HEK293T (cell line): ENCODE measurements at regions of chr1 and their contacts with region 1.

Region 1: GRCh38 chr1:3727042-3727824 is 25.0 kb upstream of the CCDC27 start:
- DNase-seq: peak; percentile 53

Region 2: DNA sequence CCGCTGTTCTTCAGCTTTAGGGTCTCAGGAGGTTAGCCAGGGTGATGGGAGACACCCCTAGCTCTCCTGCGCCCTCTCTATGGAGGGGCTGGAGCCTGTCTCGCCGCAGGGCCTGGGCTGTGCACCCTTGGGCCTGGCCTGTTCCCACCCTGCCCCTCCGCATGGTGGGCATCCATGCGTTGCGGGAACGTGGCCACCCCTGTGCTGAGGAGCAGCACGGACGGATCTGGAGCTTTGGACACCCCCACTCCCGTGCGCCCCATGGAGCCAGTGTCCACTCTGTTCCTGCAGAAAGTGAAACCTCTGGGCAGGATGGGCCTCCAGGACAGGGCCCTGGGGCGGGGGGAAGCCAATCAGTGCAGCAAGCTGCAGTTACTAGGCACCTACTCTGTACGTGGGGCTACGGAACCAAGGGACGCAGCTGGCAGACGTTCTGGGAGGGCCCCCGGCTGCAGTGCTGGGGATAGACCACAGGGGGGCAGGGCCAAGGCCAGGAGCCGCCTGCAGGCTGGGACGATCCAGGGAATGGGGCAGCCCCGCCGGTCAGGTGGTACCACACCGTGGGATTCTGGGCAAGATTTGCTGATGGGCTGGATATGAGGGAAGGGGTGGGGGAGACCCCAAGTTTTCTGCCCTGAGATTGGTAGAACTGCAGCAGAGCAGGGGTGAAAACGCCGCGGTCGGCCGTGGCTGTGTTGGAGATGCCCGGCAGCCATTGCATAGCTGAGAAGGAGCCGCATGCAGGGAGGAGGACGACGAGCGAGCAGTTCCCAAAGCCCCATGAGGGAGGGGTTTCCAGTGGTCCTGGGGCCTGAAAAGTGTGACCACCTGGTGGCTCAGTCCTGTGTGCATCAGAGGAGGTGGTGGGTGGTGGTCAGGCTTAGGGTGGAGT is 31.7 kb before region 1 on chr1:
- CTCF ChIA-PET with region 1: interaction called, 11 read pairs
- POLR2A ChIA-PET with region 1: no interaction called
- DNase-seq: peak; percentile 86

Region 3: DNA sequence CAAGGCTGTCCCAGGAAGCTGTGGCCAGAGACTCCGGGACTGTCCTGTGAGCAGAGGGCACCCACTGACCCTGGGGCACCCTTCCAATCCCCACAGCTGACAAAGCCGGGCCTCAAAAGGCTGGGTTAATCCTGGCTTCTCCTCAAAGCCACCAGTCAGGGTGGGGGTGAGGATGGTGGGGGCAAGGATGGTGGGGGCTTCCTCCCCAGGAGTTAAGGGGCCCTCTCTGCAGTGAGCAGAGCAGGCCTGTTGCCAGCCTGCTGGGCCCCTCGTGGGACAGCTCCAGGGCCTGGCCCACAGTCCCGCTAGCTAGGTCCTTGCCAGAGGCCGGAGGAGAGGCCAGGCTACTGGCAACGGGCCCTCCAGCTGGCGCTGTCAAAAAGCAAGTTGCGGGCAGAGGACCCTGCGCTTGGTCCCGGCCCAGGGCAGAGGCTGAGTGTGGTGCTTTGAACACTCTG is 12.9 kb before region 1 on chr1:
- CTCF ChIA-PET with region 1: interaction called, 11 read pairs
- POLR2A ChIA-PET with region 1: no interaction called
- DNase-seq: no peak

Region 4: DNA sequence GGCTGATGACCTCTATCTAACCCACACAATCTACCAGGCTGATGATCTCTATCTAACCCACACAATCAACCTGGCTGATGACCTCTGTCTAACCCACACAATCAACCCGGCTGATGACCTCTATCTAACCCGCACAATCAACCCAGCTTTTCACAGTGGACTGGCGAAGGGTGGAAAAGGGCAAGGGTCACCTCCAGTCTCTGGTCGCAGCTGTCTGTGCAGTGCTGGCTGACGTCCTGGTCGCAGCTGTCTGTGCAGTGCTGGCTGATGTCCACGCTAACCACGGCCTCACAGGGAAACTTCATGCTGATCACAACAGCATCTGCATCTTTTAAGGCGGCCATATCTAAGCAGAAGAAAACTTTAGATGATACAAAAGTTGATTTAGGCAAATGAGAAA is 12.8 kb after region 1 on chr1:
- CTCF ChIA-PET with region 1: no interaction called
- POLR2A ChIA-PET with region 1: no interaction called
- DNase-seq: no peak

Region 5: GRCh38 chr1:3883194-3883925 is 156.1 kb after region 1 on chr1:
- CTCF ChIA-PET with region 1: no interaction called
- POLR2A ChIA-PET with region 1: no interaction called
- DNase-seq: no peak